ENCODE measurements at regions of chr2 and their contacts with region 1.

Region 1: DNA sequence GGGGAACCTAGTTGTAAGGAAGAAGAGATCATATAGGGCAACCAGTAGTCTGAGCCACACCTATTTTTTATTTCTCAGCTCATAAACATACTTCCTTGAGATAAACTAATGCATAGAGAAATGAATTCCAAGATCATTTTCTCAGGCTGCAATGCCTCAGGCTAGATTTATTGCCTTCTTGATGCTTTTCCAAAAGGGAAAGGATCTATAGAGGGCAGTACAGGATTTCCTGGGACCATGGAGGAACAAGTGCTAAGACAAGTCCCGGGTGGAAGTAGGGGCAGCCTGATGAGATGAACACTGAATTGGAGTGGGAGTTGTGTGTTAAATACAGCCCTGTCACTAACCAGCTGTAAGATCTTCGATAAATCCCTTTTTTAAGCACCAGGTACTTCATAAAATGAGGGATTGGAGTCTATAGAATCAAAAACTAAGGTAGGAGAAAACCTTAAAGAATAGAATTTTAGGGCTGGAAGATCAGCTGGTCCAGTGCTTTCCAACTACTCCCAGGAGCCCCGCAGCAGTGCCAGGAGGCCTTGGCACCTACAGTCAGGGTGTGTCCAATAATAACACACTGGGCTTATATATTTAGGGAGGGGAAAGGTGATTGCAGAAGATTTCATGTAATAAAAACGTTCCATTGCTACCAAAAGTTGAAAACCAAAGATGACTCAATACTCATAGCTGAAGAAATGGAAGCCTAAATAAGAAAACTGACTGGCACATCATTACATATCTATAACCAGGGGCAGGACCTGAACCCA is 58.1 kb downstream of the SERTAD2 start:
- DNase-seq: peak in 2 of 4 experiments; percentile 32 to 47
- ATAC-seq: peak; percentile 78
- H3K4me3 ChIP-seq: no peak overlapping the region
- H3K27ac ChIP-seq: no peak overlapping the region
- H3K4me1 ChIP-seq: peaks cover 0 to 6% of the 10 kb centered on the region in 2 experiments; a peak in 2 of 5 replicates
- H3K27me3 ChIP-seq: no peaks in the 10 kb centered on the region
- CTCF ChIP-seq: peak; percentile 38 to 72 (median 50); a peak in 5 of 6 replicates
- EP300 ChIP-seq: no peak
- POLR2A ChIP-seq: no peak
- RAD21 ChIP-seq: peak; percentile 83 to 91

Region 2: GRCh38 chr2:64439194-64439593 is 156.4 kb before region 1 on chr2:
- CTCF ChIA-PET with region 1: no interaction called
- POLR2A ChIA-PET with region 1: no interaction called
- in situ Hi-C with region 1: no loop called
- intact Hi-C with region 1: no loop called
- DNase-seq: no peak
- ATAC-seq: no peak
- H3K4me3 ChIP-seq: no peak overlapping the region
- H3K27ac ChIP-seq: no peak overlapping the region
- H3K4me1 ChIP-seq: no peaks in the 10 kb centered on the region
- H3K27me3 ChIP-seq: peaks cover 8 to 10% of the 10 kb centered on the region in 2 experiments; a peak in 3 of 5 replicates
- CTCF ChIP-seq: no peak
- EP300 ChIP-seq: no peak
- POLR2A ChIP-seq: no peak
- RAD21 ChIP-seq: no peak

Region 3: DNA sequence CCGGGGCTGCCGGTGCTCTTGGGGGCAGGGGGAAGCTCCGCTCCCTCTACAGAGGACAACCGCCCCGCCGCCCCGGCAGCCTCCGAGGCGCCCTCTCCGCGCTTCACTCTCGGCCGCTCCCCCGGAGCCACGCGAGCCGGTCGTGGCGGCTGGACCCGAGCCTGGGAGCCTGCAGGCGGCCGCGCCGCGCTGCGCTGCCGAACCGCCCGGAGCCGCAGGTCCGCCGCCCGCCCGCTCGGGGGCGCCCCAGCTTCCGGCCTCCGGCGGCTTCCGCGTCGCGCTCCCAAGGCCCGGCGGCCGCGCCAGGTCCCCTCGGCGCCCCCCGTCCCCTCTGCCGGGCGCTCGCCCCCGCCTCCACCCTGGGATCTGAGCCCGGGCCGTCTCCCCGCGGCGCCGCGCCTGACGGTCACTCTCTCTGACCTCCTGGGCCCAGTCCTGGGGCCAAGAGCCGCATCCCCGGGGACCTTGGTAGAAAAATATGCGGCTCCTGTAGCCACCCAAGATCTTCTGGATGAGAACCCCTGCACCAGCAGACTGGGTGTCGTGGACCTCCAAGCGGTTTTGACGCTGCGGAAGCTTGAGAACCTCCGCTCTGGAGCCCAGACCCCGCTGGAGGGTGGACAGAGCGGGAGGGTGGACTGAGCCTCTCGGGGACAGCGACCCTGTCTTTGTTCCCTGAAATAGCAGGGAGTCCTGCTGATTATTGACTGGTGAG is 13.8 kb after region 1 on chr2:
- CTCF ChIA-PET with region 1: no interaction called
- POLR2A ChIA-PET with region 1: interaction called, 12 read pairs
- in situ Hi-C with region 1: no loop called
- intact Hi-C with region 1: no loop called
- DNase-seq: peak; percentile 82 to 94 (median 91)
- ATAC-seq: peak; percentile 85
- H3K4me3 ChIP-seq: peak overlapping the region; percentile 60
- H3K27ac ChIP-seq: peak overlapping the region; percentile 78
- H3K4me1 ChIP-seq: peaks cover 21 to 30% of the 10 kb centered on the region in 2 experiments; a peak in 4 of 5 replicates
- H3K27me3 ChIP-seq: no peaks in the 10 kb centered on the region
- CTCF ChIP-seq: peak in 2 of 3 experiments; percentile 55 to 69; a peak in 3 of 6 replicates
- EP300 ChIP-seq: 0 out of 2 replicates have a peak, but pooled peaks have one; percentile 5
- POLR2A ChIP-seq: peak; percentile 77
- RAD21 ChIP-seq: peak in 1 of 2 experiments; percentile 61; a peak in 3 of 4 replicates

Region 4: DNA sequence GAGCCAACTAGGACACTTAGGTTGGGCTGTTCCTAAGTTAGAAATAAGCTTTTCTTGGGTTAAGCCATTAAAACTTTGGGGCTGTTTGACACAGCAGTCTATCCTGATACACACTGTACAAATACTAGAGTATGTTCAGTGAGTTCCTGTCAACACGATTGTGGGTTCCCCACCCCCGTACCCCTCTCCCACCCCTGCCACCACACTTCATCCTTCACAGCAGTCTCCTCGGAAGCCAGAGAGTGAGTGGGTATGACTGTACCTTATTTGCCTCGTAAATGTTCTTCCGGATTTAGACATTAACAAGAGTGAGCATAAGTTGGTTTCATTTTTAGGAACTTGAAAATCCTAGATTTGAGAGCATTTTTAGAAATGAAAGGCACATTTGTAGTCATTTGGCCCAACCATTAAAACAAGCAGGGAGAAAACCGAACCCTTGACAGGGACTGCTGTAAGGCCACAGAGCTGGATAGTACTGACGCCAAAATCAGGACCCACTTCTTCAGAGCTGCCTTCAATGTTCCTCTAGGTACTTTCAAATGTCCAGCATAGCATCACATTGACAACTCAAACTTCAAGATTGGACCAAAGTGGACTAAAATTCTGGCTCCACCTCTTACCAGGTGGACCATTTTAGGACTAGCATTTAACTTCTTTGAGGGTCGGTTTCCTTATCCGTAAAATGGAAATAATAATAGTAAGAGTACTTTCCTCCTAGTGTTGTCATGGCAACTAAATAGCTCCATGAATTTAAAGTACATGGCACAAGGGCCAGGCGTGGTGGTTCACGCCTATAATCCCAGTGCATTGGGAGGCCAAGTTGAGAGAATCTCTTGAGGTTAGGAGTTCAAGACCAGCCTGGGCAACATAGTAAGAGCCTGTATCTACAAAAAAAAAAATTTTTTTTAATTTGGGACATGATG is 224.5 kb after region 1 on chr2:
- CTCF ChIA-PET with region 1: no interaction called
- POLR2A ChIA-PET with region 1: no interaction called
- in situ Hi-C with region 1: no loop called
- intact Hi-C with region 1: no loop called
- DNase-seq: no peak
- ATAC-seq: peak; percentile 27
- H3K4me3 ChIP-seq: no peak overlapping the region
- H3K27ac ChIP-seq: no peak overlapping the region
- H3K4me1 ChIP-seq: peaks cover 6 to 35% of the 10 kb centered on the region in 2 experiments; a peak in 4 of 5 replicates
- H3K27me3 ChIP-seq: no peaks in the 10 kb centered on the region
- CTCF ChIP-seq: no peak
- EP300 ChIP-seq: no peak
- POLR2A ChIP-seq: no peak
- RAD21 ChIP-seq: no peak

Region 5: GRCh38 chr2:64859312-64860212 is 264.0 kb after region 1 on chr2:
- CTCF ChIA-PET with region 1: interaction called, 14 read pairs
- POLR2A ChIA-PET with region 1: interaction called, 3 read pairs
- in situ Hi-C with region 1: loop called (anchors 5 kb)
- intact Hi-C with region 1: no loop called
- DNase-seq: peak; percentile 76 to 92 (median 91)
- ATAC-seq: peak; percentile 92
- H3K4me3 ChIP-seq: peak overlapping the region; percentile 29
- H3K27ac ChIP-seq: peak overlapping the region; percentile 67
- H3K4me1 ChIP-seq: peaks cover 28 to 33% of the 10 kb centered on the region in 2 experiments
- H3K27me3 ChIP-seq: no peaks in the 10 kb centered on the region
- CTCF ChIP-seq: peak in 2 of 3 experiments; percentile 9 to 22; a peak in 1 of 6 replicates
- EP300 ChIP-seq: no peak
- POLR2A ChIP-seq: peak; percentile 68; the same call in 1 of the 2 replicates
- RAD21 ChIP-seq: peak in 1 of 2 experiments; percentile 22; a peak in 2 of 4 replicates

Region 6: DNA sequence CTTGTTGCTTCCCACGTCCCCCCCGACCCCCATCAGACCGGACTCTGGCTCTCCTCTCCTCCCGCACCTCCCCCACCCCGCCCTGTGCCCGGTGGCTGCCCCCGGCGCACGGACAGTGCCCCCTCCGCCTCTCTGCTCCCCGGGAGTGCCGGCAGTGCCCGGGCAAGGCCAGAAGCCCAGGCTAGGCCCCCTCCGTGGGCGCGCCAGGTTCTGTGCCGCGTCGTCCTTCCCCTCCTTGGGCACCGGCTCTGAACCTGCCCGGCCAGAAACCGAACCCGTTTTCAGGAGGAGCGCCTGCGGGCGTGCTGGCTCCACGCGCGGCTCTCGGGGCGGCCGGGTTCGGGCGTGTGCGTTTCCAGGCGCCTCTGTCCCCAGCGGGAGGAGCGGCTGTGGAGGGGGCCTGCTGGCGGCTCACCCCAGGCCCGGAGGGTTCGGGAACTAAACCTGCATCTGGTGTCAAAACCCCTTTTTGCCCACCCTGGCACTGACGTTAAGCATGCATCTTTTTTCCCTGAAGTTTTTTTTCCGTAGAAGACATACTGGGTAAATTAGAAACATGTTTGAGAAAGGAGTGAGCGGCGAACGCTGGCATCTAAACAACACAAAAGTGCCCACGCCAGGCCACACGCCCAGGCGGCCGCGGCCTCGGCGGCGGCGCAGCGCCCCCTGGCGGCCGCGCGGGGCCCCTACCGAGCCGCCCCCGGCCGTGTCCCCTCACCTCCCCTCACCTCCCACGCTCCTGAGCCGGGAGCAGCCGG is 269.7 kb after region 1 on chr2:
- CTCF ChIA-PET with region 1: interaction called, 14 read pairs
- POLR2A ChIA-PET with region 1: interaction called, 3 read pairs
- in situ Hi-C with region 1: loop called (anchors 5 kb)
- intact Hi-C with region 1: loop called (anchors 1 kb)
- DNase-seq: peak; percentile 60 to 90 (median 86)
- ATAC-seq: peak; percentile 92
- H3K4me3 ChIP-seq: peak overlapping the region; percentile 14; the same call in 1 of the 2 replicates
- H3K27ac ChIP-seq: no peak overlapping the region
- H3K4me1 ChIP-seq: peaks cover 18 to 24% of the 10 kb centered on the region in 2 experiments
- H3K27me3 ChIP-seq: no peaks in the 10 kb centered on the region
- CTCF ChIP-seq: peak; percentile 56 to 66 (median 66); a peak in 5 of 6 replicates
- EP300 ChIP-seq: no peak
- POLR2A ChIP-seq: no peak
- RAD21 ChIP-seq: peak; percentile 78 to 97

Region 7: GRCh38 chr2:64873472-64873924 is 277.9 kb after region 1 on chr2:
- CTCF ChIA-PET with region 1: interaction called, 10 read pairs
- POLR2A ChIA-PET with region 1: interaction called, 3 read pairs
- in situ Hi-C with region 1: no loop called
- intact Hi-C with region 1: loop called (anchors 1 kb)
- DNase-seq: peak; percentile 77 to 86 (median 84)
- ATAC-seq: peak; percentile 95
- H3K4me3 ChIP-seq: no peak overlapping the region
- H3K27ac ChIP-seq: no peak overlapping the region
- H3K4me1 ChIP-seq: peaks cover 7 to 14% of the 10 kb centered on the region in 2 experiments; a peak in 4 of 5 replicates
- H3K27me3 ChIP-seq: no peaks in the 10 kb centered on the region
- CTCF ChIP-seq: peak; percentile 89 to 96 (median 91)
- EP300 ChIP-seq: no peak
- POLR2A ChIP-seq: no peak
- RAD21 ChIP-seq: peak; percentile 82 to 94